PC-3 (cell line): ENCODE measurements at regions of chr21 and their contacts with region 1.

Region 1: GRCh38 chr21:32727687-32728455 is at the start of gene SYNJ1:
- DNase-seq: peak; percentile 96
- ATAC-seq: peak; percentile 89
- H3K4me3 ChIP-seq: peak within 1 kb of the TSS; percentile 80
- H3K27ac ChIP-seq: peak within 1 kb of the TSS; percentile 1
- H3K4me1 ChIP-seq: peaks cover 12% of the 10 kb centered on the region
- H3K27me3 ChIP-seq: no peaks in the 10 kb centered on the region
- CTCF ChIP-seq: no peak
- total RNA-seq, gene SYNJ1: 7.0 and 16.2 TPM in 2 replicates

Region 2: GRCh38 chr21:32131960-32132359 is 595.9 kb before region 1 on chr21:
- CTCF ChIA-PET with region 1: no interaction called
- POLR2A ChIA-PET with region 1: no interaction called
- intact Hi-C with region 1: no loop called
- DNase-seq: peak; percentile 34
- ATAC-seq: peak; percentile 69
- H3K4me3 ChIP-seq: no peak overlapping the region
- H3K27ac ChIP-seq: no peak overlapping the region
- H3K4me1 ChIP-seq: peaks cover 7% of the 10 kb centered on the region; the same call in 1 of the 2 replicates
- H3K27me3 ChIP-seq: peaks cover 55% of the 10 kb centered on the region
- CTCF ChIP-seq: no peak

Region 3: DNA sequence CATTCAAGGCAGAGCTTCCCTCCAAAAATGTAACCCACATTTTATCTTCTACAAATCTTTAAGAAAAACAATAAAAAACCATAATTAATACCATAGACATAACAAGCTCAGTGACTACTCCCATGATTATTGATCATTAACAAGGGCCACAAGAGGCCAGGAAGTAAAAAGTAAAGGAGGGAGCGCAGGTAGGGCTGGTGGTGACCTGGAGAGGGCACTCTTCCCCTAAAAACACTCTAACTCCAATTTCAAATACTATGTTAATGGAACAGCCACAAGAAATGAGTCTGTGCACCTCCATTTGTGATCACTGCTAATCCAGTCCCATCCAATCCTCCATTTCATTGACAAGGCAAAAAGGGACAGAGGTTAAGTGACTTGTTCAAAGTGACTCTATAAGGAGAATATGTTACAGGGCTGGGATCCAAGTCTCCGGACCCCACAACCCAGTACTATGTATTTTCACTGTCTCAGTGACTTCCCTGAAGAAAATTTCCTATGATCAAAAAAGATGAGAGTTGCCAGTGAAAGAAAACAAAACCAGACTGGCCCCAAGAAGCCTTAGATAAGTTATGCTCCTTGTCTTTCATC is 74.5 kb before region 1 on chr21:
- CTCF ChIA-PET with region 1: no interaction called
- POLR2A ChIA-PET with region 1: no interaction called
- intact Hi-C with region 1: loop called (anchors 5 kb)
- DNase-seq: peak; percentile 51
- ATAC-seq: peak; percentile 90
- H3K4me3 ChIP-seq: no peak overlapping the region
- H3K27ac ChIP-seq: no peak overlapping the region
- H3K4me1 ChIP-seq: no peaks in the 10 kb centered on the region
- H3K27me3 ChIP-seq: no peaks in the 10 kb centered on the region
- CTCF ChIP-seq: peak; percentile 92

Region 4: GRCh38 chr21:32682696-32683474 is 45.0 kb before region 1 on chr21:
- CTCF ChIA-PET with region 1: no interaction called
- POLR2A ChIA-PET with region 1: no interaction called
- intact Hi-C with region 1: loop called (anchors 5 kb)
- DNase-seq: no peak
- ATAC-seq: no peak
- H3K4me3 ChIP-seq: no peak overlapping the region
- H3K27ac ChIP-seq: no peak overlapping the region
- H3K4me1 ChIP-seq: no peaks in the 10 kb centered on the region
- H3K27me3 ChIP-seq: no peaks in the 10 kb centered on the region
- CTCF ChIP-seq: no peak

Region 5: GRCh38 chr21:32770871-32771523 is 43.1 kb after region 1 on chr21:
- CTCF ChIA-PET with region 1: interaction called, 10 read pairs
- POLR2A ChIA-PET with region 1: interaction called, 3 read pairs
- intact Hi-C with region 1: loop called (anchors 2 kb)
- DNase-seq: peak; percentile 50
- ATAC-seq: peak; percentile 33
- H3K4me3 ChIP-seq: peak overlapping the region; percentile 93
- H3K27ac ChIP-seq: peak overlapping the region; percentile 67
- H3K4me1 ChIP-seq: peaks cover 26% of the 10 kb centered on the region
- H3K27me3 ChIP-seq: no peaks in the 10 kb centered on the region
- CTCF ChIP-seq: no peak

Region 6: GRCh38 chr21:33451634-33452071 is 723.8 kb after region 1 on chr21:
- CTCF ChIA-PET with region 1: no interaction called
- POLR2A ChIA-PET with region 1: no interaction called
- intact Hi-C with region 1: loop called (anchors 5 kb)
- DNase-seq: peak; percentile 93
- ATAC-seq: peak; percentile 96
- H3K4me3 ChIP-seq: peak overlapping the region; percentile 10; the same call in 1 of the 2 replicates
- H3K27ac ChIP-seq: peak overlapping the region; percentile 79
- H3K4me1 ChIP-seq: peaks cover 26% of the 10 kb centered on the region
- H3K27me3 ChIP-seq: no peaks in the 10 kb centered on the region
- CTCF ChIP-seq: no peak

Region 7: DNA sequence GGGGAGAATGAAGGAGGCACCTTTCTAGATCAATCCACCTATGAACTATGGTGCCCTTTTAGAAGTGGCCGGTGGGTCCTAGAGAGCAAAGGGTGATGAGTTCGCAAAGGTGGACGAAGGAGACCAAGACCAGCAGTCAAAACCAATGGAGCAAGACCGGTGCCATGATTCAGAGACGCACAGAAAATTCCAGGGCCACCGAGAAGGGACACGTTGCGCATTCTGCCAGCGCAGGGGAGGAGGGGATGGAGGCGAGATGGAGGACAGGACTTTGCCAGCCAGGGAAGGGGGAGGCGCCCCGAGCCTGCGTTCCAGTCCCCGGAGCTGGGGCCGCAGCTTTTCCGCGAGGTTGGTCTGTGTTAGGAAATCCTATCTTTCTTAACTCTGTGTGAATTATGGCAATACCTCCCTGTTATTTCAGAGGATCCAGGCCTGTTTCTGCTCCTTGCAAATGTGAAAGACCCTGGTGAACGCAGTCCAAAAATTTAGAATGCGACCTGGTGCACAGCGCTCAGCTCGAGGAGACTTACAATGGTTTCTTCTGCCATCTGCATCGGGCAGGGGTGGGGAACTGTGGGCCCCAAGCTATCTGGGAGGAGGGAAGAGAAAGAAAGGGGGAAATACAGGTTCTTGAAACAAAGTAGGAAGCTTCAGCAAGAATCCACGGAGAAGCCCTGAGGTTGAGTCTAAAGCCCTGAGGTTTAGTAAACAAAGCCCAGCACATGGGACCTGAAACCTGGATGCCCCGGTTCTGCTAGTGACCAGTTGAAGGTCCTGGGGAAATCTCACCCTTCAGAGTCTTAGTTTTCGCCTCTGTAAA is 1474.9 kb after region 1 on chr21:
- CTCF ChIA-PET with region 1: no interaction called
- POLR2A ChIA-PET with region 1: interaction called, 12 read pairs
- intact Hi-C with region 1: no loop called
- DNase-seq: no peak
- ATAC-seq: no peak
- H3K4me3 ChIP-seq: peak overlapping the region; percentile 56
- H3K27ac ChIP-seq: no peak overlapping the region
- H3K4me1 ChIP-seq: peaks cover 17% of the 10 kb centered on the region
- H3K27me3 ChIP-seq: no peaks in the 10 kb centered on the region
- CTCF ChIP-seq: no peak